ENCODE measurements at regions of chr1 and their contacts with region 1.

Region 1: DNA sequence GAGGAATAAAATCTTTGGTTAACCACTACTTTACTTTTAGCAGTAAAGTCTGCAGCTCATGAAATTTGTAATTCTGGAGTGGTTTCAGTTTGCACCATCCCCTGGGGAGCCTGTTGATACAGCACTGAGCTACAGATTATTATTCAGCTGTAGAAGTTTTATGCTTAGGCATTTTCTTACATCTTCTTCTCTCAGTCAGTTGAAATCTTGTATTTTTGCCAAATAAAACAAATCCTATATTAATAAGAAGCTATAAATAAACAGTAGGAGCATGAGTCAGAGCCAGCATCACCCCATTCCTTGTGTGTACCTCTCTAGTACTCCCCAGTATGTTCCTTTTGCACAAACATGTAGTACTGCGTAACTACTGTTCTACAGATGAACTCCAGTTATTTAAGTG is 118.9 kb downstream of the ATF6 start:
- ATAC-seq: peak in 4 of 8 experiments; percentile 19 to 66 (median 30)
- H3K4me3 ChIP-seq: no peak overlapping the region
- H3K27ac ChIP-seq: no peak overlapping the region
- H3K4me1 ChIP-seq: no peaks in the 10 kb centered on the region

Region 2: DNA sequence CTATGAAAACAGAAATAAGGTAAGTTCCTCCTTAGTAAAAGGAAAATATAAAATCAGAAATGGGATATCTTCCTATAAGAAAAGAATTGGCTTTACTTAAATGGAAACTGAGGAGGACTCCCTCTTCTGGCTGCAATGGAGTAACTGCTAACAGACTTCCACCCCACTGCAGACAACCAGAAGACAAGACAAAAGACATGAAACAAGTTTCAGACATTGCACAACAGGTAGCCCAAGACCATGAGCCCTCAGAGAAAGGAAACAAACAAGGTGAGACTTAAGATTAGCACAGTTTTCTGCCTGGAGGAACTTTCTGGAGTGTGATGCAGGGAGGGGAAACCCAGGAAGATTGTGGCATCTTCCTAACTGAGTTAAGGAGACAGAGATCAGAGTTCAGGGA is 155.7 kb after region 1 on chr1:
- in situ Hi-C with region 1: loop called in 1 of 9 experiments (anchors 25 kb)
- ATAC-seq: peak in 1 of 8 experiments; percentile 28
- H3K4me3 ChIP-seq: no peak overlapping the region
- H3K27ac ChIP-seq: no peak overlapping the region
- H3K4me1 ChIP-seq: no peaks in the 10 kb centered on the region

Measured in motor neuron (in vitro differentiated cells).